ENCODE measurements at regions of chr7 and their contacts with region 1.

Region 1: DNA sequence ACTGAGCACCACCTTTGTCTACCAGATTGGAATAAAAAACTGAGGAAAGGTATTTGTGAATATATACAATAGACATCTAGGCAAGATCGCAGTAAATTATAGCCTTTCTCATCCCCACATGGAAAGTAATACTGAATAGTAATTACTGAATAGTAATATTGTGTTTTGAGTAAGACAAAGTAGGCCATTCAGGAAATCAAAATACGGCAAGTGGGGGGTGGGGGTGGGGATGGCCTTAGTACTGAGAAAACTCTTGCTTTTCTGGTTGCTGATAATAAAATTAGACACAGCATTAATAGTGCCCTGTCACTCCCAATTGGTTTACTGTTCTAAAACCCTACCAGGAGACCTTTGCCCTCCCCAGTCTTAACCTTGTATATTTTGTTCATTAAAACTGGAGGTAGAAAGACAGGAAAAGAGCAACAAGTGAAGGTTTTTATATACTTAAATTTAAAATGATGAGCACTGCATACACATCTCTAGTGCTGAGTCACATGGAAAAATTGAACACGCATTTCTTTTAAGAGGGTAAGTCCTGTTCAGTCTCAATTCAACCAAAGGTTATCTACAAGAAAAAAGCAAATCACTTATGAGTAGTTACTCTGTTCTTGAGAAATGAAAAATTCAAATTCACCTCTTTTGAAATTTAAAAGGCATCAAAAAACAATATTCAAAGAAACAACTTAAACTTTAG is 65.6 kb downstream of the IGF2BP3 start:
- DNase-seq: no peak
- H3K4me3 ChIP-seq: no peak overlapping the region
- H3K27ac ChIP-seq: no peak overlapping the region
- H3K4me1 ChIP-seq: no peaks in the 10 kb centered on the region
- H3K27me3 ChIP-seq: no peaks in the 10 kb centered on the region
- CTCF ChIP-seq: no peak
- EP300 ChIP-seq: no peak
- POLR2A ChIP-seq: no peak

Region 2: DNA sequence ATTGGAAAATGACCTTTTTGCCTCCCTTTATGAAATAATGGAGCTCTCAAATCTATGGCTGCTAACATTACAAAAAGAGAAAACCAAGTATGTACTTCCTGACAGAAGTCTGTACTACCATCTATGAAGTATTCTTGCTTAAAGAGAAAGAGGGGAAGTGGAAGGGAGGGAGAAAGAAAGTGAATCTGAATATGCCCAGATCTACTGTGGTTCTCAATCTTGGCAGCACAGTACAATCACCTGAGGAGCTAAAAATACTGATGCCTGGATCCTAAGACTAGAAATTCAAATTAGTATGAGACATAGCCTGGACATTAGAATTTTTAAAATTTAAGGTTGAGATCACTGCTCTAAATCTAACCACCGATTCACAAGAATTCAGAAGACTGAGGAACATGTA is 19.6 kb before region 1 on chr7:
- intact Hi-C with region 1: loop called in 1 of 4 experiments (anchors 1 kb)
- DNase-seq: no peak
- H3K4me3 ChIP-seq: no peak overlapping the region
- H3K27ac ChIP-seq: no peak overlapping the region
- H3K4me1 ChIP-seq: no peaks in the 10 kb centered on the region
- H3K27me3 ChIP-seq: no peaks in the 10 kb centered on the region
- CTCF ChIP-seq: no peak
- EP300 ChIP-seq: no peak
- POLR2A ChIP-seq: no peak

Region 3: GRCh38 chr7:23426876-23427275 is 22.2 kb after region 1 on chr7:
- intact Hi-C with region 1: no loop called
- DNase-seq: no peak
- H3K4me3 ChIP-seq: no peak overlapping the region
- H3K27ac ChIP-seq: no peak overlapping the region
- H3K4me1 ChIP-seq: no peaks in the 10 kb centered on the region
- H3K27me3 ChIP-seq: no peaks in the 10 kb centered on the region
- CTCF ChIP-seq: no peak
- EP300 ChIP-seq: no peak
- POLR2A ChIP-seq: no peak

Measured in ovary (tissue), 10 donors.